ENCODE measurements at regions of chr3 and their contacts with region 1.

Region 1: GRCh38 chr3:69420781-69421520 is 35.1 kb upstream of the FRMD4B start:
- DNase-seq: no peak
- H3K4me3 Mint-ChIP-seq: no peak overlapping the region
- H3K27ac Mint-ChIP-seq: no peak overlapping the region
- H3K4me1 Mint-ChIP-seq: no peaks in the 10 kb centered on the region
- H3K27me3 Mint-ChIP-seq: no peaks in the 10 kb centered on the region

Region 2: DNA sequence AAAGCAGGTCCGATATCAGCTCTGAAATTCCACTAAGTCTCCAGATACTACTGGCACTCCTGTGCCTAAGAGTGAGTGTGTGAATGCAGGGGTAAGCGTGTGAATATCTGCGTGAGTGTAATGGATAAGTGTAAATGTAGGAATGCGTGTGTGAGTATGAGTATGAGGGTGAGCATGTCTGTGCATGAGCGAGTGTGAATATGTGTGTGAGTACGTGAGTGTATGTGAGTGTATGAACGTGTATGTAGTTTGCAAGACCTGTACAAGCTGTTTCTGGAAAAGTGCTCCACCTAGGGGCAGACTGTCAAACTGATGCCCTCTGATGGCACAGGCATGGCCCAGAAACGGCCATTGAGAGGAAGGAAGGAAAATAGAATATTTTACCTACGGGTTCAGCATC is 10.7 kb before region 1 on chr3:
- CTCF ChIA-PET with region 1: interaction called, 11 read pairs
- POLR2A ChIA-PET with region 1: no interaction called
- DNase-seq: peak; percentile 74
- H3K4me3 Mint-ChIP-seq: no peak overlapping the region
- H3K27ac Mint-ChIP-seq: no peak overlapping the region
- H3K4me1 Mint-ChIP-seq: peaks cover 5% of the 10 kb centered on the region
- H3K27me3 Mint-ChIP-seq: peaks cover 12% of the 10 kb centered on the region

Measured in activated CD4-positive, alpha-beta memory T cell treated with anti-CD3 and anti-CD28 coated beads, Interleukin-2, amount 10 ng/mL, durations not matched to agents 7 days and 5 days (primary cell).